Endothelial cell of umbilical vein (primary cell): ENCODE measurements at regions of chr11 and their contacts with region 1.

Region 1: DNA sequence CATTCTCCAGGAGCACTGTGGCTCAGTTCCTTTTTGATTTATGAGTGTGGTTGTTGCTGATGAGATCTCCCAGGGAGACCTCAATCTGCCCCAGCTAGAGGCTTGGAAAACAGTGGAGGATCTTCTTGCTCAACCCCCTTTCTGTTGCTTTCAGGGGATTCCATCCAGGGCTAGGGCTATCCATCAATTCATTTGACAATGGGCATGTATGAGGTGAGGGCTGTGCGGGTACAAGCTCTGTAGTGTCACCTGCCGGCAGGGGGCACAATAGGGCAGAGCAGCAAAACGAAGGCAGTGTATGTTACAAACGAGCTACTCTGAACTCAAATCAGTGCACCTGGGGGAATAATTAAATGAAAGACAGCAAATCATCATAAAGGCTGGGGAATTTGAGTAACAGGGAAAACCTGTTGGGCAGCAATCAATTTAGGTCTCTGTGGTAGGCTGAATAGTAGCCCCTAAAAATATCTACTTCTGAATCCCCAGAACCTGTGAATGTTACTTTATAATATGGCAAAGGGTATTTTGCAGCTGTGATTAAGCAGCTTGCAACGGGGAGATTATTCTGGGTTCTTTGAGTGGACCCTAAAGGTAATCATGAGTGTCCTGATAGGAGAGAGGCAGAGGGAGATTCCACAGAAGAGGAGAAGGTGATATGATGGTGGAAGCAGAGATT is 170.3 kb upstream of the ZBED5 start:
- DNase-seq: peak; percentile 52
- H3K4me3 ChIP-seq: no peak overlapping the region
- H3K27ac ChIP-seq: no peak overlapping the region
- H3K4me1 ChIP-seq: peaks cover 8% of the 10 kb centered on the region
- H3K27me3 ChIP-seq: peaks cover 4 to 6% of the 10 kb centered on the region in 2 experiments
- CTCF ChIP-seq: peak; percentile 70 to 81
- POLR2A ChIP-seq: no peak

Region 2: GRCh38 chr11:10770626-10771254 is 257.4 kb before region 1 on chr11:
- CTCF ChIA-PET with region 1: interaction called, 10 read pairs
- POLR2A ChIA-PET with region 1: no interaction called
- dilution Hi-C with region 1: no loop called
- intact Hi-C with region 1: no loop called
- DNase-seq: peak; percentile 71
- H3K4me3 ChIP-seq: no peak overlapping the region
- H3K27ac ChIP-seq: no peak overlapping the region
- H3K4me1 ChIP-seq: no peaks in the 10 kb centered on the region
- H3K27me3 ChIP-seq: no peaks in the 10 kb centered on the region
- CTCF ChIP-seq: peak; percentile 69 to 75
- POLR2A ChIP-seq: no peak

Region 3: GRCh38 chr11:11157185-11157584 is 129.0 kb after region 1 on chr11:
- CTCF ChIA-PET with region 1: interaction called, 10 read pairs
- POLR2A ChIA-PET with region 1: no interaction called
- dilution Hi-C with region 1: no loop called
- intact Hi-C with region 1: loop called (anchors 5 kb)
- DNase-seq: peak; percentile 6
- H3K4me3 ChIP-seq: no peak overlapping the region
- H3K27ac ChIP-seq: no peak overlapping the region
- H3K4me1 ChIP-seq: no peaks in the 10 kb centered on the region
- H3K27me3 ChIP-seq: no peaks in the 10 kb centered on the region
- CTCF ChIP-seq: peak in 1 of 2 donors; percentile 54
- POLR2A ChIP-seq: no peak

Region 4: GRCh38 chr11:11667056-11667455 is 638.9 kb after region 1 on chr11:
- CTCF ChIA-PET with region 1: interaction called, 10 read pairs
- POLR2A ChIA-PET with region 1: no interaction called
- dilution Hi-C with region 1: no loop called
- intact Hi-C with region 1: no loop called
- DNase-seq: no peak
- H3K4me3 ChIP-seq: no peak overlapping the region
- H3K27ac ChIP-seq: no peak overlapping the region
- H3K4me1 ChIP-seq: no peaks in the 10 kb centered on the region
- H3K27me3 ChIP-seq: peaks cover 0 to 2% of the 10 kb centered on the region in 2 experiments
- CTCF ChIP-seq: no peak
- POLR2A ChIP-seq: no peak

Region 5: DNA sequence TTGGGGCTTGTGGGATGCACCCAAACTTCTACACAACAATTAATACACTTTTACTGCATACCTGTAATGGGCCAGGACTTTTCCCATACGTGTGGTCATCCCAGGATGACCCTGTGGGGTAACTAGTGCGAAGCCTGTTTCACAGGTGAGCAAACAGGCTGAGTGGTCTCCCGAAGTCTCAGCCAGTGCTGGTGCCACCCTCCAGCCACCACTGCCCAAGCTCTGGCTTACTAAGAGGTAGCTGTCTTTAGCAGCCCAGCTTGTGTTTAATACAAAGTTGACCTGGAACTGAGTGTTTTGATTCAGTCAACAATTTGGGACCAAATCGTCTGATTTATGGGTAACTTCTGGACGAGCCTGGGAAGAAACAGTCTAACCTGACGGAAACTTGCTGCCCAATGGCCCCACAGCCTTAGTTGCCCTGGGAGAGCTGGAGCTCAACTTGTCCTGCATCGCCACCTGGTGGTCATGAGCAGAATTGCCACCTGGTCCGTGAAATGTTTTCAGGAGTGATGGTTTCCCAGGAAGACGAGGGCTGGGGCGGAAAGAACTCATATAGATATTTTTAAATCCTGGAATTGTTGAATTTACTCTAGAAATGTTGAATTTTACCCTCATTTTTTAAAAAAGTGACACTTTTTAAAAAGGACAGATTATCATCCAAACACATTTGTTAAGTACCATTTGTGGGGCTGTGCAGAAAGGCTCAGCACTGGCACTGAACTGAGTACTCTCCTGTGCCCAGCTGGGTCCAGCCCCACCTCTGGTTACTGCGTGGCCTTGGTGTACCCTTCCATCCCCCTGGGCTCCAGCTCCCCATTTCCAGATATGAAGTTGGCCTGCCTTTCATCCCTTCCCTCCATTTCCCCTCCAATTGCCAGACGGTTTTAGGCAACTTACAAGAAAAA is 1253.7 kb after region 1 on chr11:
- CTCF ChIA-PET with region 1: interaction called, 6 read pairs
- POLR2A ChIA-PET with region 1: no interaction called
- dilution Hi-C with region 1: no loop called
- intact Hi-C with region 1: loop called (anchors 5 kb)
- DNase-seq: peak; percentile 81
- H3K4me3 ChIP-seq: no peak overlapping the region
- H3K27ac ChIP-seq: no peak overlapping the region
- H3K4me1 ChIP-seq: peaks cover 27% of the 10 kb centered on the region
- H3K27me3 ChIP-seq: no peaks in the 10 kb centered on the region
- CTCF ChIP-seq: peak; percentile 82 to 91
- POLR2A ChIP-seq: no peak